ENCODE measurements at regions of chr7 and their contacts with region 1.

Region 1: GRCh38 chr7:145902123-145902522 is 214.5 kb upstream of the CNTNAP2 start:
- DNase-seq: no peak
- H3K4me3 ChIP-seq: no peak overlapping the region
- H3K27ac ChIP-seq: no peak overlapping the region
- H3K4me1 ChIP-seq: no peaks in the 10 kb centered on the region
- CTCF ChIP-seq: 0 out of 2 replicates have a peak, but pooled peaks have one; percentile 18

Region 2: DNA sequence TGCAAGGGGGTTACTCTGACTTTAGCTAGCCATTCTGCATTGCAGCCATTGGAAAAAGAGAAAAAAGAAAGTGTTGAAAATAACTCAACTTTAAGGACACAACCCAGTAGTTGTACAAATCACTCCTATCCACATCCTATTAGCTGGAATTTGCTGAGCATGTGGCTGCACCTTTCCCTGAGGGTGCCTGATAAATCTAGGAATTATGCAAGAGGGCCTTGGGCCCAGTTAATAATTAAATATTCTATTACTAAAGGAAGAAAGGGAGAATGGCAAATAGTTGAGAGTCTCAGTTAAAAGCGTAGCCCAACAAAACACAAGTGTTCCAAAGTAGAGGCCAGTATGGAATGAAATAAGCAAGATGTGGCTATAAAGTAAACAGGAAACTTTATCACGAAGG is 13.6 kb after region 1 on chr7:
- CTCF ChIA-PET with region 1: no interaction called
- POLR2A ChIA-PET with region 1: interaction called, 11 read pairs
- intact Hi-C with region 1: no loop called
- DNase-seq: no peak
- H3K4me3 ChIP-seq: no peak overlapping the region
- H3K27ac ChIP-seq: no peak overlapping the region
- H3K4me1 ChIP-seq: peaks cover 6% of the 10 kb centered on the region
- CTCF ChIP-seq: no peak